IMR-90 (cell line): ENCODE measurements at regions of chr9 and their contacts with region 1.

Region 1: GRCh38 chr9:33290247-33291030 is at the start of gene NFX1:
- DNase-seq: peak; percentile 99
- ATAC-seq: peak; percentile 91
- H3K4me3 ChIP-seq: peak within 1 kb of the TSS; percentile 68
- H3K27ac ChIP-seq: peak within 1 kb of the TSS; percentile 99
- H3K4me1 ChIP-seq: peaks cover 4% of the 10 kb centered on the region; the same call in 1 of the 2 replicates
- H3K27me3 ChIP-seq: no peaks in the 10 kb centered on the region
- CTCF ChIP-seq: no peak
- POLR2A ChIP-seq: peak; percentile 98
- RAD21 ChIP-seq: no peak
- total RNA-seq, gene NFX1: 36.0 and 36.9 TPM in 2 replicates

Region 2: GRCh38 chr9:33350310-33350709 is 59.9 kb after region 1 on chr9:
- CTCF ChIA-PET with region 1: no interaction called
- POLR2A ChIA-PET with region 1: no interaction called
- dilution Hi-C with region 1: no loop called
- in situ Hi-C with region 1: no loop called
- intact Hi-C with region 1: loop called (anchors 10 kb)
- DNase-seq: peak; percentile 95
- ATAC-seq: peak; percentile 59
- H3K4me3 ChIP-seq: no peak overlapping the region
- H3K27ac ChIP-seq: peak overlapping the region; percentile 67; the same call in 1 of the 2 replicates
- H3K4me1 ChIP-seq: peaks cover 16% of the 10 kb centered on the region
- H3K27me3 ChIP-seq: no peaks in the 10 kb centered on the region
- CTCF ChIP-seq: no peak
- POLR2A ChIP-seq: no peak
- RAD21 ChIP-seq: no peak

Region 3: GRCh38 chr9:33452828-33453271 is 162.4 kb after region 1 on chr9:
- CTCF ChIA-PET with region 1: no interaction called
- POLR2A ChIA-PET with region 1: no interaction called
- dilution Hi-C with region 1: loop called (anchors 25 kb)
- in situ Hi-C with region 1: no loop called
- intact Hi-C with region 1: loop called (anchors 1 kb)
- DNase-seq: peak; percentile 84
- ATAC-seq: peak; percentile 97
- H3K4me3 ChIP-seq: no peak overlapping the region
- H3K27ac ChIP-seq: no peak overlapping the region; the same call in 1 of the 2 replicates
- H3K4me1 ChIP-seq: peaks cover 3% of the 10 kb centered on the region
- H3K27me3 ChIP-seq: no peaks in the 10 kb centered on the region
- CTCF ChIP-seq: peak; percentile 86
- POLR2A ChIP-seq: no peak
- RAD21 ChIP-seq: peak; percentile 62

Region 4: DNA sequence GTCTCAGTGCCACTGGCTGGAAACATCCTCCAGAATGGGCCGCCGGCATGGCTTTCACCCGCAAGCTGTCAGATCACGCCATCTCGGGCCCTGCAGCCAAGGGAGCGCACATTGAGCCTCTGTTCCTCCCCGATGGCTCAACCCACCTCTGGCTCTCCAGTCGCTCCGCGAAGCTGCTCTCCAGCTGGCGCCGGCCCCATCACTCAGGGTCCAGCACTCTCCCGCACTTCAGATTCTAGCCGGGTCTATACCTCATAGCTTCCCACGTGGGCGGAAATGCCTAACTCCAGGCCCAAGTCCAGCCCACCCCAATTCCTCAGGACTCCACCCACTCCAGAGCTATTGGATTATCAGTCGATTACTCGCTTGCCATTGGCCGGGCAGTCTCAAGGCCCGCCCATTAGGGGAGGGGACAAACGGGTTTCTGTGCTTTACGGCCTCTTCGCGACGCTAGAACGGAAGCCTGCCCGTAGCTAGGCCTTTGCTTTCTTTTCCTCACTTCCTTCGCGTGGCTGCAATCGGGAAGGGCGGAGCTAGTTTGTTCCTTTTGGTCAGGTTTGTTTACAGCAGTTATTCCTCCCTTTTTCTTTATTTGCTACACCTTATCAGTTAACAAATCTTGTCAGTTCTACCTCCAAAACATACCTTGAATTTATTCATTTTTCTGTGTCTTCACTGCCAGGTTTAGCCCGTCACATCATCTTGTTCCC is 183.4 kb after region 1 on chr9 and contains the start of gene NOL6:
- CTCF ChIA-PET with region 1: no interaction called
- POLR2A ChIA-PET with region 1: interaction called, 21 read pairs
- dilution Hi-C with region 1: loop called (anchors 25 kb)
- in situ Hi-C with region 1: loop called (anchors 5 kb)
- intact Hi-C with region 1: no loop called
- DNase-seq: peak; percentile 99
- ATAC-seq: peak; percentile 99
- H3K4me3 ChIP-seq: peak within 1 kb of the TSS; percentile 57
- H3K27ac ChIP-seq: peak within 1 kb of the TSS; percentile 57
- H3K4me1 ChIP-seq: peaks cover 3% of the 10 kb centered on the region; the same call in 1 of the 2 replicates
- H3K27me3 ChIP-seq: no peaks in the 10 kb centered on the region
- CTCF ChIP-seq: no peak
- POLR2A ChIP-seq: peak; percentile 95
- RAD21 ChIP-seq: no peak
- total RNA-seq, gene NOL6: 42.8 and 47.3 TPM in 2 replicates

Region 5: DNA sequence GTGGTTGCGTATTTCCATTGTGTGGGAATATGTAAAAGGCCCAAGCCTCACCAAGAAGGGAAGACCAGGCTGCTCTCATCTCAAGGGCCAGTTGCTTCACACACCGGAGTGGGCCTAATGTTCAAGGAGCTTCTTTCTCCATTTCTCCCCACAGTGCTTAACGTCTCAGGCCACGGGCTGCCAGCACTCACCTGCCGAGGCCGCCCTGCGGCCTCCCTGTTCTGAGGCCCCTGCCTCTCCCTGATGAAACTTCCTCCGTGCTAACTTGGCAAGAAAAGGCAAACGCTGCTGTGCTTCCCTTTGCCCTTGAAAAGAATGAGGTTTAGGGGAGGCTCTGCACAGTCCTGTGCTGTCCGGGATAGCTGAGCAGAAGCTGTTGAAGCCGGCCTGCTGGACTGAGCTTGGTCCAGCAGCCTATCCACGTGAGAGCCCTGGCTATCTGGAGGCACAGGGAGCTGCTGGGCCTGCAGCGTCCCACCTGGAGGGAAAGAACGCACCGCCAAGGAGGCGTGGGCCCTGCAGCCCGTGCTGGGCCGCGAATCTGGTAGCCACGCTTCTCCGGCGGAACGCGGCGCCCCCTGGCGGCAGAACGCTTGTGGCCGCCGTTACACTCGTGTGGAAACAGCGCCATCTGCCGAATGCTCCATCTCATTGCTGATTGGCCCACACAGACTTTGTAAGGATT is 431.4 kb after region 1 on chr9:
- CTCF ChIA-PET with region 1: no interaction called
- POLR2A ChIA-PET with region 1: no interaction called
- dilution Hi-C with region 1: no loop called
- in situ Hi-C with region 1: no loop called
- intact Hi-C with region 1: loop called (anchors 2 kb)
- DNase-seq: peak; percentile 74
- ATAC-seq: peak; percentile 91
- H3K4me3 ChIP-seq: no peak overlapping the region
- H3K27ac ChIP-seq: no peak overlapping the region
- H3K4me1 ChIP-seq: no peaks in the 10 kb centered on the region
- H3K27me3 ChIP-seq: peaks cover 11% of the 10 kb centered on the region
- CTCF ChIP-seq: peak; percentile 100
- POLR2A ChIP-seq: 0 out of 2 replicates have a peak, but pooled peaks have one; percentile 40
- RAD21 ChIP-seq: peak; percentile 99